ENCODE measurements at regions of chr3 and their contacts with region 1.

Region 1: DNA sequence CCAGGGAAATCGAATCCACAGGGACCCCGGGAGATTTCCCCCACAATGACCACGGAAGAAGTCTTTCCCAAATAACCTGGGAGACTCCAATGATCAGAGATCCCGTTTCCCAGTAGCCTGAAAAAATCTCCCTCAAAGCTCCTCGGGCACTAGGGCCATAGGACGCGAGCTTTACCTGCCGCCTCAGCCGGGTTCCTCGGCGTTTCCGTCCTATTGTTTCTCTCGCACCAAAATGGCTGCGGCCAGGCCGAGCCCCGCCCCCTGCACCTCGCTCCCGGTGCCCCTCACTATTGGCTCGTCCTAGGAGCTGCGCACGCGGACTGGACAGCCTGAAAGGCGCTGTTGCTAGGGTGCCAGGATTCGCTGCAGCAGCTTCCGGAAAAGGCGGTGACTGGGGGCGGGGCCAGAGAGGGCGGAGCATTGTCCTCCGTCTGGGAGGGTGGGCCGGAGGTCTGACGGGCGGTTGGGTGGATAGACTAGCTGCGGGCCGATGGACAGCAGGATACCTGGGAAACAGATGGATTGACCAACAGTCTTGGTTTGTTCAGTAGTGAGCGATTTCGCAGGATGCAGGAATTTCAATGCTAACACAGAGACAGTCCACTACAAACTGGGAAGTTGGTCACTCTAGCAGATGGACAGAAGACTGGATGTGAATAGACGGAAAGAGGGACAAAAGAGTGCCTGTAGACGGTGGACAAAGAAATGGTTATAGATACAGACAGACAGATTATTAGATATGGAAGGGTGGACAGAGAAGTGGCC is at the start of gene IP6K2:
- DNase-seq: peak; percentile 99
- H3K4me3 Mint-ChIP-seq: peak within 1 kb of the TSS; percentile 97
- H3K27ac Mint-ChIP-seq: peak within 1 kb of the TSS; percentile 90
- H3K4me1 Mint-ChIP-seq: peaks cover 30% of the 10 kb centered on the region
- H3K27me3 Mint-ChIP-seq: no peaks in the 10 kb centered on the region
- total RNA-seq, gene IP6K2: 64.3 to 68.3 TPM

Region 2: GRCh38 chr3:48367201-48367600 is 350.0 kb before region 1 on chr3:
- CTCF ChIA-PET with region 1: no interaction called
- intact Hi-C with region 1: no loop called
- DNase-seq: no peak
- H3K4me3 Mint-ChIP-seq: no peak overlapping the region
- H3K27ac Mint-ChIP-seq: no peak overlapping the region
- H3K4me1 Mint-ChIP-seq: no peaks in the 10 kb centered on the region
- H3K27me3 Mint-ChIP-seq: no peaks in the 10 kb centered on the region

Region 3: DNA sequence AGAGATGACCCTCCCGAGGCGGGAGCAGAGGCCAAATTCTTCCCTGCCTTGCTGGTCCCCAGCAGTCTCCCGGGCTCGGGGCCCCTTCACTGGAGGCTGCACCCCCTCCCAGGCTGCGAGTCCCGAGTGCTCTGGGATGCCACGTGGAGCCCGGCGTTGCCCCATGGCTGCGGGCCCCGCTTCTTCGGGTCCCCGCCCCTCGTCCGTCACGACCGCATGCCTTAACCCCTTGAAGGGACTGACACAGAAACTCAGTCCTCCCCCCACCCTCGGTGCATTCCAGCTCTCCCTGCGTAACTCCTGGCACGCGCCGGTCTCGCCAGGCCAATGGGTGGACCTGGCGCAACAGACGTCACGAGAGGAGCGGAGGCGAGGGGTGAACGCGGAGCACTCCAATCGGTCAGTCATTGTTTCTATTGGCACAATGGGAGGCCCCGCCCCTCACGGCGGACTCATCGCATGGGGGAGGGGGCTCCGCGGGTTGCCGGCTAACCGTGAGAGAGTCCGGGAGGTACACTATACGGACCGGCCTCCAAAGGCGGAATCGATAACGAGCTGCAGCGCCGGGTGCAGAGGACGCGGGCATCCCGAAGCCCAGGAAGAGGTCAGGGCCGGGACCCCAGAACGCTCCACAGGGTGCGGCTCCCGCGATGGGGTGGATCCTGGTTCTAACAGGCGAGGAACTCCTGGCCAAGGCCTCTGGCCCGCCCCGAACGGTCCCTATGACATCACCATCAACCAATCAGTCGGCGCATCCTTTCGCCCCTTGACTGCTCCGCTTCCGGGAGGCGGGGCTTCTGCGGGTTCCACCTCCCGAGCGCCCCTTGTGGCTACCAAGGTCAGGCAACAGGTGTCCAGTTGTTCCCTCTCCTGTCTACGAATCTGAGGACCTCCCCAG is 53.5 kb before region 1 on chr3:
- CTCF ChIA-PET with region 1: no interaction called
- intact Hi-C with region 1: loop called (anchors 5 kb)
- DNase-seq: peak; percentile 94
- H3K4me3 Mint-ChIP-seq: peak overlapping the region; percentile 84
- H3K27ac Mint-ChIP-seq: peak overlapping the region; percentile 61
- H3K4me1 Mint-ChIP-seq: peaks cover 17% of the 10 kb centered on the region
- H3K27me3 Mint-ChIP-seq: peaks cover 35% of the 10 kb centered on the region

Region 4: DNA sequence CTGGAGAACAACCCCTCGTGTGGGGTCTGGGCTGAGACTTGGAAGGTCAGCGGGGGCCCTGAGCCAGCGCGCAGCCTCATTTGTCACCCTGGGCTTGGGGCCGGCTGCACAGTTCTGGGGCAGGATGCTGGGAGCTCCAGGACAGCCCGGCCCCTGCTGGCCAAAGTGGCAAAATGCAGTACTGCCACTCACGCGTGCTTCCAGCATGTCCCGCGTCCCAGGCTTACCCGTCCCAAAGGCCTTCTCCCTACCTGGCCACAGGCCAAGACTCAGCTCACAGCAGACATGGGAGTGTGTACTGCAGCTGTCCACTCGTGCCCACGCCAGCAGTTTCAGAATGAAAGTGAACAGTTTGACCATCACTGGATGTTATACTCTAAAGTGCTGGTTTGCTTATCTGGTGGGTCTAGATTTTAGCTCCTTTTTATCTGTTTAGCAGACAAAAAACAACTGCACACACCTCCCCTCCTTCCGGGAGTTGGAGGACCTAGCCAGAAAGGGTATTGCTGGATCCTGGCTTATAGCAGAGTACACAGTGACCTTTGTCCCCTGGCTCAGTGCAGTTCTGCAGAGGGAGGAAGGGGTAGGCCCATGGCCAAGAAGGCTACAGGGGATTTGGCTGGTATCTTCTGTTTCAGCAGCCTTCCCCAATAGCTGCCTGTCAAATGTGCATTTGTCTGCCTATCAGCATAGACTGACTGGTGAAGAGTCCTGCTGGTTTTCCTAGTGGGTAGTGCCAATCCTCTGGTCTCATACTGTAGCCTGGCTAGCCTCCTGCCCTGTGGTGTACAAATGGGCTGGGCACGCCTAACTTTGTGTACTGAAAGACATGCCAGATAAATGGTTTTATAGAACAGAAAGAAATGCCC is 23.0 kb after region 1 on chr3:
- CTCF ChIA-PET with region 1: interaction called, 21 read pairs
- intact Hi-C with region 1: no loop called
- DNase-seq: peak; percentile 71
- H3K4me3 Mint-ChIP-seq: no peak overlapping the region
- H3K27ac Mint-ChIP-seq: no peak overlapping the region
- H3K4me1 Mint-ChIP-seq: no peaks in the 10 kb centered on the region
- H3K27me3 Mint-ChIP-seq: no peaks in the 10 kb centered on the region

Region 5: GRCh38 chr3:48918388-48919214 is 201.4 kb after region 1 on chr3 and contains the start of gene ARIH2:
- CTCF ChIA-PET with region 1: no interaction called
- intact Hi-C with region 1: loop called (anchors 1 kb)
- DNase-seq: peak; percentile 89
- H3K4me3 Mint-ChIP-seq: peak within 1 kb of the TSS; percentile 98
- H3K27ac Mint-ChIP-seq: peak within 1 kb of the TSS; percentile 100
- H3K4me1 Mint-ChIP-seq: peaks cover 29% of the 10 kb centered on the region
- H3K27me3 Mint-ChIP-seq: no peaks in the 10 kb centered on the region
- total RNA-seq, gene ARIH2: 96.1 to 99.1 TPM

Measured in activated naive CD4-positive, alpha-beta T cell treated with anti-CD3 and anti-CD28 coated beads for 36 hours (primary cell).